ENCODE measurements at regions of chr19 and their contacts with region 1.

Region 1: DNA sequence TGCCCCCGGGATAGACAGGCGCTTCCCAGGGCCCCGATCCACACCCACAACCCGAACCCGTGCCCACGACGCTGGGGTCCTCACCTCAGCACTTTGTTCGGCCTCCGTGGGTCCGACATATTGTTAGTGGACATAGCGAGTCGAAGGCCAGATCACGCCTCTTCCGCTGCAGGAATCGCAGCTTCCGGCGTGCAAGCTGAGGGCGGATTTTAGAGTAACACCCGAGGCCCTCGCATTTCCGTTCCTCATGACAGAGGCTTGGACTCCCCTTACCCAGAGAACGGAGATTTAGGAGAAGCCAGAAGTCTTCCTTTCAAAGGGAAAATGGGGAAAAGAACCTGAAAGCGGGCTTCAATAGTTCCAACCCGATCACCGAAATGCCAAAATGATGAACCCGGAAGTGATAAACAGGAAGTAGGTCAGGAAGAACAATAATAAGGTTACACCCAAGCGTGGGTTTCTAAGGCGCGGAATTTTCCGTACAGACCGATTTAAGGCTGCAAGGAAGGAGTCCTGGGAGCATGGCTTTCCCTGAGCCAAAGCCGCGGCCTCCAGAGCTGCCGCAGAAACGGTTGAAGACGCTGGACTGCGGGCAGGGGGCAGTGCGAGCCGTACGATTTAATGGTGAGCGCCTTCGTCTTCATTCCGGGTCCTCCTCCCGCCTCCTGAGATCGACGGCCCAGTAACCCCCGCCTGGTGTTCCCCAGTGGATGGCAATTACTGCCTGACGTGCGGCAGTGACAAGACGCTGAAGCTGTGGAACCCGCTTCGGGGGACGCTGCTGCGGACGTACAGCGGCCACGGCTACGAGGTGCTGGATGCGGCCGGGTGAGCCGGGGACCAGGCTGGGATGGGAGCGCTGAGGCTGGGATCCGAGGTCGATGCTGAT is 2.9 kb downstream of the WDR83 start:
- DNase-seq: peak; percentile 80 to 82
- H3K4me3 ChIP-seq: peak overlapping the region; percentile 97
- H3K4me1 ChIP-seq: peaks cover 21% of the 10 kb centered on the region
- H3K27me3 ChIP-seq: no peaks in the 10 kb centered on the region

Region 2: DNA sequence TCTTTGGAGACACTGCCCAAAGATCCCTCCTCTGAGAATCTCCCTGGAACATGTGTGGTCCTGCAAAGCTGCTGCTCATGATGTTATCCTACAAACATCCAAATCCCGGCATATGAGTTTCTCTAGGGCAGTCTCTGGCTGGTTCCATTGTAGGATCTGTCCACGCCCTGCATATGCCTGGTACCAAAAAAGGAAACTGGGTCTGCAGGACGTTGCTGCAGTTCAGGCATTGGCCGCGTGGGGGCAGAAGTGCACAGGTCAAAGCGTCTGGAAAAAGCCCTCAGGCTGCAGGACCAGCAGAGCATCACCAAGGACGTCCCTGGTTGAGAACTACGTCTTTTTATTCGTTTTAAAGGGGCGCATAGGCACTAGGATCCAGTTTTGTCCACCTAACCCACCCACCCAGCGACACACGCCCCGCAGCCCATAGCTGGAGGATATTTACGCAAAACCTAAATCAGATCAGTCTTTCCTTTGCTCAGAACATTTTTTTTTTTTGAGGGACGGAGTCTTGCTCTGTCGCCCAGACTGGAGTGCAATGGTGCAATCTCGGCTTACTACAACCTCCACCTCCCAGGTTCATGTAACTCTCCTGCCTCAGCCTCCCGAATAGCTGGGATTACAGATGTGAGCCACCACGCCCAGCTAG is 105.4 kb before region 1 on chr19:
- in situ Hi-C with region 1: loop called (anchors 5 kb)
- DNase-seq: peak; percentile 71 to 95
- H3K4me3 ChIP-seq: no peak overlapping the region
- H3K4me1 ChIP-seq: no peaks in the 10 kb centered on the region
- H3K27me3 ChIP-seq: no peaks in the 10 kb centered on the region